Activated naive CD4-positive, alpha-beta T cell treated with anti-CD3 and anti-CD28 coated beads for 36 hours (primary cell): ENCODE measurements at regions of chr17 and their contacts with region 1.

Region 1: DNA sequence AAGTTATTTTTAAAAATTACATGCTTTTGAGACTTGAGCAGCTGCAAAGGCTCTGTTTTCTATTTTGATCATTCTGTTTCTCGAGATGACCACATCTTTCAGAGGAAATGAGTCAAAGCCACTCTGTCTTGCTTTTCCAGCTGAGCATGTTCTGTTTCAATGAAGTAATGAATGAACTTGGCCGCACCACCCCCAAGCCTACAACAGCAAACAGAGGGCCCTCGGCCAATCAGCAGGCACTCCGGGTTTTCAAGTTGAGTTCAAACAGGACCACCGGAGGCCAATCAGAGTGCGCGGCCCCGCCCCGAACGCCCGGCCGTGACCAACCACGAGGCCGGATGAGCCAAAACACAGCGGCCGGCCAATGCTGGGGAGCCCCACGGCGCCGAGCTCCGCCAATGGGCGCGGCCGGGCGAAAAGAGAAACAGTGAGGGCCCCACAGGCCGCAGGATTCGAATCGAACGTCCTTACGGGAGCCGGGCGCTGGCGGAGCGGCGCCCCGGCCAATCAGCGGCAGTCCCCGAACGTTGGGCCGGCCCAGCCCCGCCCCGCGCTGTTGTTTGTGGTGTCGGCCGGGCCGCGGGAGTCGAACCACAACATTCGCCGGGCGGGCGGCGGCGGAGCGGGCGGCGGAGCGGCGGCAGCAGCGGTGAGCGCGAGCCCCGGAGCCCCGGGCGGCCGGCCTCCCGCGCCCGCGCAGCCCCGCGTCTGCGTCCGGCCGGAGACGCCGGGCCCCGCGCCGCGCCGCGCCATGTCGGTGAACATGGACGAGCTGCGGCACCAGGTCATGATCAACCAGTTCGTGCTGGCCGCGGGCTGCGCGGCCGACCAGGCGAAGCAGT is at the start of gene UBALD2:
- DNase-seq: peak; percentile 99
- H3K4me3 Mint-ChIP-seq: peak within 1 kb of the TSS; percentile 88
- H3K27ac Mint-ChIP-seq: peak within 1 kb of the TSS; percentile 100
- H3K4me1 Mint-ChIP-seq: peaks cover 48% of the 10 kb centered on the region
- H3K27me3 Mint-ChIP-seq: no peaks in the 10 kb centered on the region
- total RNA-seq, gene UBALD2: 467 to 472 TPM

Region 2: GRCh38 chr17:75034236-75034908 is 1230.6 kb before region 1 on chr17:
- CTCF ChIA-PET with region 1: no interaction called
- intact Hi-C with region 1: loop called (anchors 10 kb)
- DNase-seq: peak; percentile 96
- H3K4me3 Mint-ChIP-seq: peak overlapping the region; percentile 95
- H3K27ac Mint-ChIP-seq: peak overlapping the region; percentile 93
- H3K4me1 Mint-ChIP-seq: peaks cover 46% of the 10 kb centered on the region
- H3K27me3 Mint-ChIP-seq: peaks cover 3% of the 10 kb centered on the region

Region 3: DNA sequence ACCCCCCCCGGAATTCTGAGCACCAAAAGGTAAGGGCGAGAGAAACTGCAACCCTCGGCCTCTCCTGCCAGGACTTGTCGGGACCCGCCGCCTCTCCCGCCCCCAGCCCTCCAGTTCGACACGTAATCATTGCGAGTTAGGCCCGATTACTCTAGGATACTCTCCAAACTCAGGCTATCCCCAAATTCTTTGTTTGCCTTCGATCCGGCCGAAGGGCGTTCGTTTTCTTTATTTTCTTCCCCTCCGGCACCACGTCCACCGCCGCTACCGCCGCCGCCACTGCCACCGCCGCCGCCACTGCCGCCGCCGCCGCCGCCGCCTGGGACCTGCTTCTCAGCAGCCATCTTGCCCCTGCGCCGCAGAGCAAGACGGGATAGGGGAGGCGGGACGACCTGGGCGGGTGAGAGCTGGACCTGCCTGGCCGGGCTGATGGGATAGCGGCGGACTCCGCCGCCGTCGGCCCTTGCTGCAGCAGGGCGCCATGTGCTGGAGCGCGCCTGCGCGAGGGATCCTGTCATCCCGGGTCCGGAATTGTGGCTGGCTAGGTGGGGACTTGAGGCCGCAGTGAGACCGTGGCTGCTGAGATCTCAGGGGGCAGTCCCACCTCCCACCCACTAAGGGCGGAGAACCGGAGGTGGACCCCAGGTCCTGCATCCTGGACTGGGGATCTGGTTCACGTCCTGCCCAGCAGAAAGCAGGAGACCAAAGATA is 192.7 kb before region 1 on chr17 and contains the start of gene SRP68:
- CTCF ChIA-PET with region 1: no interaction called
- intact Hi-C with region 1: loop called (anchors 2 kb)
- DNase-seq: peak; percentile 86
- H3K4me3 Mint-ChIP-seq: peak within 1 kb of the TSS; percentile 95
- H3K27ac Mint-ChIP-seq: peak within 1 kb of the TSS; percentile 98
- H3K4me1 Mint-ChIP-seq: peaks cover 49% of the 10 kb centered on the region
- H3K27me3 Mint-ChIP-seq: peaks cover 33% of the 10 kb centered on the region
- total RNA-seq, gene SRP68: 127 to 131 TPM

Region 4: GRCh38 chr17:76191896-76192295 is 73.1 kb before region 1 on chr17:
- CTCF ChIA-PET with region 1: interaction called, 8 read pairs
- intact Hi-C with region 1: loop called (anchors 1 kb)
- DNase-seq: peak; percentile 73
- H3K4me3 Mint-ChIP-seq: peak overlapping the region; percentile 66
- H3K27ac Mint-ChIP-seq: peak overlapping the region; percentile 98
- H3K4me1 Mint-ChIP-seq: peaks cover 87% of the 10 kb centered on the region
- H3K27me3 Mint-ChIP-seq: no peaks in the 10 kb centered on the region

Region 5: GRCh38 chr17:76246080-76247066 is 18.6 kb before region 1 on chr17:
- CTCF ChIA-PET with region 1: interaction called, 24 read pairs
- intact Hi-C with region 1: loop called (anchors 1 kb)
- DNase-seq: peak; percentile 86
- H3K4me3 Mint-ChIP-seq: peak overlapping the region; percentile 55
- H3K27ac Mint-ChIP-seq: peak overlapping the region; percentile 79
- H3K4me1 Mint-ChIP-seq: peaks cover 69% of the 10 kb centered on the region
- H3K27me3 Mint-ChIP-seq: no peaks in the 10 kb centered on the region

Region 6: GRCh38 chr17:76557368-76558197 is 292.6 kb after region 1 on chr17:
- CTCF ChIA-PET with region 1: no interaction called
- intact Hi-C with region 1: no loop called
- DNase-seq: peak; percentile 97
- H3K4me3 Mint-ChIP-seq: peak overlapping the region; percentile 96
- H3K27ac Mint-ChIP-seq: peak overlapping the region; percentile 96
- H3K4me1 Mint-ChIP-seq: peaks cover 54% of the 10 kb centered on the region
- H3K27me3 Mint-ChIP-seq: no peaks in the 10 kb centered on the region

Region 7: DNA sequence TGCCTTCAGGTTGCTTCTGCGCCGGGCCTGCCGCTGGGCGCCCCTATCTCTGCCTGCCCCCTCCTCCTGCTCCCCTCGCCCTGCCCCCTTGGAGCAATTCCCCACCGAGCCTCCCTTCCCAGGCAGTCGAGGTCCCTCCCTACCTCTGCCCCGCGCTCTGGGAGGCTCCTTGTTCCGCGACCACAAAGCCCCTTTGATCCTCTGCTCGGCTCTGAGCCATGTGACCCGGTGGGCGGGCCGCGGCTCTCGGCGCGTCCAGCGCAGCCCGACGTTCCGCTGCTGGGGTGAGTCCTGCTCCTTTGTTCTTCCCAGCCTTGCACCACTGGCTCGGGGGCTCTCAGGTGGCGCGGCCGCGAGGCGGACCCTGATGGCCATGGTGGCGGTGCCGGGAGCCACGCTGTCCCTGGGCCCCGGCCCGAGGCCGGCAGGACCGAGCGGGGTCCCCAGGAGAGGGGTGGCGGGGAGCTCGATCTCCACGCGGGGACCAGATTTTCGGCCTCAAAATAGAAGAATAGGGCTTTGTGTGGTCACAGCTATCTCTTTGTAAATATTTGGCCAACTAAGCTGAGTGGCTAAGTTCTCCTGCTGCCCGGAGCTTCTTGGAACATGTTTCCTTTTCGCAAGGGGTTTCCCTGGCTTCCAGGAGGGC is 1186.4 kb after region 1 on chr17:
- CTCF ChIA-PET with region 1: no interaction called
- intact Hi-C with region 1: loop called (anchors 10 kb)
- DNase-seq: peak; percentile 83
- H3K4me3 Mint-ChIP-seq: peak overlapping the region; percentile 86
- H3K27ac Mint-ChIP-seq: peak overlapping the region; percentile 100
- H3K4me1 Mint-ChIP-seq: peaks cover 42% of the 10 kb centered on the region
- H3K27me3 Mint-ChIP-seq: no peaks in the 10 kb centered on the region